ENCODE measurements at regions of chr14 and their contacts with region 1.

Region 1: DNA sequence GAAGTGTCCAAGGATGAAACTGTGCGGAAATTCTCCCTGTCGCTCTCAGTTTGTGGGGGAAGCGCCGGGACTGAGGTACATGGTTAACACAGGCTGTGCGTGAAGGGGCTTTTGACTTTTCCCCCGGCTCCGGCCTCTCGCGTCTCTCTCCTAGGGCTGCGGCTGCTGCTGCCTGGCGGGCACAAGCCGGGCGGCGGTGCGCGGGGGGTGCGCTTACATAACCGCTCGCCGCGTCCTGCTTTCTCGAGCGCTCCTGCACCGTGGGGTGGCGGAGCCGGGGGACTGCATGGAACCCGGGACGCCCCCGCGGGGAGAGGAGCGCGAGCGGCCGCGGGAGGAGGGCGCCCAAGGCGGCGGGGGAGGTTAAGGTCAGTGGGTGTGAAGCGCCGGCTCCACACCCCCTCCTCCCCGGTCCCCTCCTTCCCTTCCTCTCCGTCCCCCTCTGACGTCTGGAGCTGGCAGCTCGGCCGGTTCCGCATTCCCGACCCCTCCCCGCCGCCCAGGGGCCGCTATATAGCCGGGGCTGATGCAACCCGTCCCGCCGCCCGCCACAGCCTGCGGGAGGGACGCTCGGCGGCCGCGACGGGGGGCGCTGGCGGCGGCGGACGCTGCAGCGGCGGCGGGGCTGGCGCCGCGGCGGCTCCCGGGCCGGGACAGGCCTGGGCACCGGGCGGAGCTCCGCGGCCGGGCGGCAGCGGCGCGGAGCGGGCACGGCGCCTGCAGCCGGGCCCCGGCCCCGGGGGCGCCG is at the start of gene JDP2:
- DNase-seq: peak; percentile 26
- H3K4me3 ChIP-seq: peak within 1 kb of the TSS; percentile 57 to 69 (median 66)
- H3K27ac ChIP-seq: no peak within 1 kb of the TSS
- H3K4me1 ChIP-seq: peaks cover 11% of the 10 kb centered on the region
- H3K27me3 ChIP-seq: no peaks in the 10 kb centered on the region
- CTCF ChIP-seq: no peak
- total RNA-seq, gene JDP2: 13.8 to 39.7 TPM

Region 2: GRCh38 chr14:74429221-74429691 is 998.4 kb before region 1 on chr14:
- CTCF ChIA-PET with region 1: no interaction called
- dilution Hi-C with region 1: no loop called
- in situ Hi-C with region 1: no loop called
- intact Hi-C with region 1: no loop called
- DNase-seq: no peak
- H3K4me3 ChIP-seq: no peak overlapping the region
- H3K27ac ChIP-seq: no peak overlapping the region
- H3K4me1 ChIP-seq: no peaks in the 10 kb centered on the region
- H3K27me3 ChIP-seq: no peaks in the 10 kb centered on the region
- CTCF ChIP-seq: no peak

Region 3: GRCh38 chr14:75452900-75453747 is 25.5 kb after region 1 on chr14:
- CTCF ChIA-PET with region 1: no interaction called
- dilution Hi-C with region 1: no loop called
- in situ Hi-C with region 1: no loop called
- intact Hi-C with region 1: loop called (anchors 1 kb)
- DNase-seq: peak; percentile 83
- H3K4me3 ChIP-seq: no peak overlapping the region
- H3K27ac ChIP-seq: peak overlapping the region; percentile 31
- H3K4me1 ChIP-seq: peaks cover 27% of the 10 kb centered on the region
- H3K27me3 ChIP-seq: no peaks in the 10 kb centered on the region
- CTCF ChIP-seq: peak in 1 of 2 donors; percentile 13